ENCODE measurements at regions of chr16 and their contacts with region 1.

Region 1: DNA sequence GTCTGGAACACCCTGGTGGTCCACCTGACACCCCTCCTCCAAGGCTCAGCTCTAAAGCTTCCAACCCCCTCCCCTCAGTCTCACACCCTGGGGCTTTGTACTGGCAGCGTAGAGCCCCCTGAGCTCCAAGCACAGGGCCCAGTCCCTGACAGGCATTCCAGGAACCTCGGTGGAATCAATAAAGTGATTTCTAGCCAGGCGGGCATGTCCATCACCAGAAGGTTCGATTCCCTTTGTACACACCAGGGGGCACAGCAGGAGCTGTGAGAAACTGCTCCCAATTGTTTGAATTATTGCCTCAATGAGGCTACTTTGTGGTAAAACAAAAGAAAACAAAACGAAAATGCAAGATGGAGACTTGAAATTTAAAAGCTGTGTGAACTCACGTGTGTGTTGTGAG is 51.8 kb downstream of the SMPD3 start:
- DNase-seq: peak; percentile 49
- H3K4me3 ChIP-seq: no peak overlapping the region
- H3K27ac ChIP-seq: no peak overlapping the region
- H3K4me1 ChIP-seq: peaks cover 0 to 16% of the 10 kb centered on the region in 2 experiments; a peak in 1 of 4 replicates
- H3K27me3 ChIP-seq: no peaks in the 10 kb centered on the region; the same call in 1 of the 2 replicates
- CTCF ChIP-seq: peak; percentile 51
- EP300 ChIP-seq: no peak
- RAD21 ChIP-seq: peak; percentile 69

Region 2: GRCh38 chr16:68367030-68367429 is 29.5 kb before region 1 on chr16:
- CTCF ChIA-PET with region 1: interaction called, 13 read pairs
- POLR2A ChIA-PET with region 1: no interaction called
- DNase-seq: peak; percentile 74
- H3K4me3 ChIP-seq: no peak overlapping the region
- H3K27ac ChIP-seq: no peak overlapping the region
- H3K4me1 ChIP-seq: peaks cover 0 to 54% of the 10 kb centered on the region in 2 experiments; a peak in 2 of 4 replicates
- H3K27me3 ChIP-seq: no peaks in the 10 kb centered on the region
- CTCF ChIP-seq: peak; percentile 54
- EP300 ChIP-seq: no peak
- RAD21 ChIP-seq: peak; percentile 51

Region 3: GRCh38 chr16:68377670-68378393 is 18.6 kb before region 1 on chr16:
- CTCF ChIA-PET with region 1: interaction called, 12 read pairs
- POLR2A ChIA-PET with region 1: no interaction called
- DNase-seq: peak; percentile 89
- H3K4me3 ChIP-seq: no peak overlapping the region
- H3K27ac ChIP-seq: peak overlapping the region in 1 of 2 experiments; percentile 74; a peak in 2 of 4 replicates
- H3K4me1 ChIP-seq: peaks cover 0 to 24% of the 10 kb centered on the region in 2 experiments; a peak in 1 of 4 replicates
- H3K27me3 ChIP-seq: no peaks in the 10 kb centered on the region
- CTCF ChIP-seq: no peak
- EP300 ChIP-seq: no peak; a peak in 1 of 4 replicates
- RAD21 ChIP-seq: peak; percentile 3; the same call in 1 of the 2 replicates

Region 4: DNA sequence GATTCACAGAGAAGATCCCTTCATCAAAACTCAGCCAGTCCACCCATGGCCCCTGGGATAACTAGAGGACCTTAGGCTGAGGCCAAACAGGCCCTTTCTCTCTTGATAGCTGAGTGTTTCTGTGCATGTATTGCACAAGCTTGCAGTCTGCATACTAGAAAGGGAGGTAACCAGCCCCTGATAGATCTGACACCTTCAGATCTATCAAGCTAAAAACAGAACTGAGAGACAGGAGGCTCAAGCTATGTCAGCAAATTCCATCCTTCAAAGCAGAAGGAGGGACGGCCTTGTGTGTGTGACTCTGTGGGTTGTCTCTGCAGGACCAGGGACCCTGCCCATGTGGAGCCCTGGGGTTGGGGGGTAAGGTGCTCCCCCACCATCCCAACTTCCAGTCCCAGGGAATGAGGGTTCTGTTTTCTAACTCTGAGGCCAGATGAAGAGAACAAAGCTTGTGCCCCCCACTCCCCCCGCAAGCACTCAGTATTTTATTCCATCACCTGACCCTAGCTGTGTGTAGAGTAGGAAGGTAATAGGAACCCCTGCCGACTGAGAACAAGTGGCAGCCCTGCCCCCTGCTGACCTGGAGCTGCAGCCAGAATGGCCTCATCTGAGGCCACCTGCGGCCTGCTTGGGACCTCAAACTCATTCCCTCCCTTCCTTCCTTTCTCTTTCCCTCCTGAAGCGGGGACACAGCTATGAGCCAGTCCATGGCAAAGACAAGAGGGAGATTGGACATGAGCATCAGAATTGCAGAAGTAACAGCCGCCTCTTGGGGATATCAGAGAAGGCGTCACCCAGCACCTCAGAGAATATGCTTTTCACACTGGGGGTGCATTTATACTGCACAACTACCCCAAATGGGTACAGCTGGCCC is 12.0 kb before region 1 on chr16:
- CTCF ChIA-PET with region 1: interaction called, 12 read pairs
- POLR2A ChIA-PET with region 1: no interaction called
- DNase-seq: no peak
- H3K4me3 ChIP-seq: no peak overlapping the region
- H3K27ac ChIP-seq: no peak overlapping the region
- H3K4me1 ChIP-seq: no peaks in the 10 kb centered on the region; a peak in 1 of 4 replicates
- H3K27me3 ChIP-seq: peaks cover 8% of the 10 kb centered on the region; the same call in 1 of the 2 replicates
- CTCF ChIP-seq: no peak
- EP300 ChIP-seq: no peak
- RAD21 ChIP-seq: no peak

Region 5: GRCh38 chr16:68406451-68407152 is 10.1 kb after region 1 on chr16:
- CTCF ChIA-PET with region 1: interaction called, 24 read pairs
- POLR2A ChIA-PET with region 1: interaction called, 3 read pairs
- DNase-seq: peak; percentile 76
- H3K4me3 ChIP-seq: peak overlapping the region; percentile 23; a peak in 2 of 4 replicates
- H3K27ac ChIP-seq: peak overlapping the region in 1 of 2 experiments; percentile 95; a peak in 2 of 4 replicates
- H3K4me1 ChIP-seq: peaks cover 7 to 14% of the 10 kb centered on the region in 2 experiments; a peak in 3 of 4 replicates
- H3K27me3 ChIP-seq: peaks cover 7% of the 10 kb centered on the region; the same call in 1 of the 2 replicates
- CTCF ChIP-seq: no peak
- EP300 ChIP-seq: peak in 1 of 2 experiments; percentile 49; a peak in 1 of 4 replicates
- RAD21 ChIP-seq: no peak; the same call in 1 of the 2 replicates

Region 6: DNA sequence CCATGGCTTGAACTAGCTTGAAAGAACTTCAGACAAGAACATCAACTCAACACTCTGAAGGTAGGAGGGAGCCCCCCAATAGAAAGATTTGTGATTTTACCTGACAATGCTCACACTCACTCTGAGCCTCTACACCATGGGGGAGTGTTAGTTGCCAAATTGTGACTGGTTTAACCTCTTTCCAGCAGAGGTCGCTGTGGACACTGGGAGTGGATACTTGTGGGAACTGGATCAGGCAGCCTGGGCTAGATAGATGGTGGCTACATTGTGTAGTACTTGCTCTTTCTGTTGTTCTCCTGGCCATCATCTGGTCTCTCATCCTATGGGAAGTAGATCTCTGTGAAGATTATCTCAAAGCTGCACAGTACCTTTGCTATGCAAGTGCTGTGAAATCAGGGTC is 49.0 kb after region 1 on chr16:
- CTCF ChIA-PET with region 1: interaction called, 12 read pairs
- POLR2A ChIA-PET with region 1: no interaction called
- DNase-seq: peak; percentile 63
- H3K4me3 ChIP-seq: no peak overlapping the region
- H3K27ac ChIP-seq: no peak overlapping the region
- H3K4me1 ChIP-seq: peaks cover under 1 to 21% of the 10 kb centered on the region in 2 experiments; a peak in 1 of 4 replicates
- H3K27me3 ChIP-seq: no peaks in the 10 kb centered on the region
- CTCF ChIP-seq: peak; percentile 49
- EP300 ChIP-seq: no peak
- RAD21 ChIP-seq: peak; percentile 68

Measured in SK-N-SH (cell line).